Activated CD8-positive, alpha-beta memory T cell treated with anti-CD3 and anti-CD28 coated beads, Interleukin-2, amount 10 ng/mL, durations not matched to agents 7 days and 5 days (primary cell): ENCODE measurements at regions of chr3 and their contacts with region 1.

Region 1: GRCh38 chr3:176872771-176873209 is 324.5 kb downstream of the TBL1XR1 start:
- DNase-seq: peak; percentile 73
- ATAC-seq: peak; percentile 87
- H3K4me3 Mint-ChIP-seq: no peak overlapping the region
- H3K27ac Mint-ChIP-seq: no peak overlapping the region
- H3K4me1 Mint-ChIP-seq: peaks cover 4% of the 10 kb centered on the region
- H3K27me3 Mint-ChIP-seq: no peaks in the 10 kb centered on the region

Region 2: GRCh38 chr3:176714034-176714433 is 158.8 kb before region 1 on chr3:
- CTCF ChIA-PET with region 1: no interaction called
- DNase-seq: no peak
- ATAC-seq: no peak
- H3K4me3 Mint-ChIP-seq: no peak overlapping the region
- H3K27ac Mint-ChIP-seq: no peak overlapping the region
- H3K4me1 Mint-ChIP-seq: no peaks in the 10 kb centered on the region
- H3K27me3 Mint-ChIP-seq: no peaks in the 10 kb centered on the region

Region 3: DNA sequence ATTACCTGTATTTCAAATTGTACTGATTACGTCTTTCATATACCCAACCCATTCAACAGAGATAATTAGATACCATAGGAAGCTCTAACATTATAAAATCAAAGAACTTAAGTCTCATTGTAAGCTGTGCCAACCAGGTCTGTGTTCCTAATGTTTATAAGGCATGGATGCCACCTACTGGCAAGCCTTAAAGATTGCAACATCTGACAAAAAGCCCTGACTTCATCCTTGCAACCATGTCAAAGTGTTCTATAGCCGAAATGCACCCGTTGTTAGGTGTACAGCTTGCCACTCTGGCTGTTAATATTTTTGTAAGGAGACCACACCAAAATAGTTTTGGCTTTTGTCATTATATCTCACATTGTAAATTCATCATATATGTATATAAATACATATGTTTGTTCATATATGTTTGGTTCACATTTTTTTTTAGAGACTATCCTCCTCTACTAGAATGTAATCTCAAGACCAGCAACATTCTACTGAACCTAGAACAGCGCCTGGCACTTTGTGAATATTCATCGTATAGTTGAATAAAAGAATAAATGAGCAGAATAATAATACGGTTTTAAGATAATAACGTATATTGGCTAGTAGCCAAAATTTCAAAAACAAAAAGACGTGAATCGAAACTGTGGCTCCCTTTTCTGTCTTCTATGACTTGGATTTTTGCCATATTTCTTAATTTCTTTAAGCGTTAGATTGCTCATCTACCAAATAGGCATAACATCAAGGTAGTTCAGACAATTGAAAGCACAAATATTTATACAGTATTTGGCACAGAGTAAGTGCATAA is 66.4 kb after region 1 on chr3:
- CTCF ChIA-PET with region 1: interaction called, 46 read pairs
- DNase-seq: peak; percentile 53
- ATAC-seq: peak; percentile 75
- H3K4me3 Mint-ChIP-seq: no peak overlapping the region
- H3K27ac Mint-ChIP-seq: no peak overlapping the region
- H3K4me1 Mint-ChIP-seq: peaks cover 13% of the 10 kb centered on the region
- H3K27me3 Mint-ChIP-seq: peaks cover 2% of the 10 kb centered on the region